Calu3 (cell line): ENCODE measurements at regions of chr11 and their contacts with region 1.

Region 1: GRCh38 chr11:66112601-66113098 is 42.6 kb downstream of the PACS1 start:
- DNase-seq: no peak
- H3K4me3 Mint-ChIP-seq: peak overlapping the region; percentile 47
- H3K27ac Mint-ChIP-seq: peak overlapping the region; percentile 85
- H3K4me1 Mint-ChIP-seq: peaks cover 63% of the 10 kb centered on the region
- H3K27me3 Mint-ChIP-seq: no peaks in the 10 kb centered on the region
- CTCF ChIP-seq: no peak

Region 2: GRCh38 chr11:66183494-66184048 is 70.9 kb after region 1 on chr11:
- CTCF ChIA-PET with region 1: no interaction called
- intact Hi-C with region 1: loop called (anchors 10 kb)
- DNase-seq: no peak
- H3K4me3 Mint-ChIP-seq: no peak overlapping the region
- H3K27ac Mint-ChIP-seq: no peak overlapping the region
- H3K4me1 Mint-ChIP-seq: no peaks in the 10 kb centered on the region
- H3K27me3 Mint-ChIP-seq: no peaks in the 10 kb centered on the region
- CTCF ChIP-seq: no peak